Activated T-helper 1 cell treated with anti-CD3 and anti-CD28 coated beads, Interleukin-12 subunit alpha, Interleukin-12 subunit beta, Interleukin-2, Interleukin-4 antibody, amounts not matched to agents 30 ng/mL and 10 ng/mL and 1 ng/mL, durations not matched to agents 14 hours and 24 hours and 36 hours (primary cell): ENCODE measurements at regions of chr11 and their contacts with region 1.

Region 1: GRCh38 chr11:61254403-61255025 is 13.5 kb downstream of the PGA5 start:
- DNase-seq: peak; percentile 58
- H3K4me3 Mint-ChIP-seq: no peak overlapping the region
- H3K27ac Mint-ChIP-seq: no peak overlapping the region
- H3K4me1 Mint-ChIP-seq: no peaks in the 10 kb centered on the region
- H3K27me3 Mint-ChIP-seq: peaks cover 3% of the 10 kb centered on the region

Region 2: DNA sequence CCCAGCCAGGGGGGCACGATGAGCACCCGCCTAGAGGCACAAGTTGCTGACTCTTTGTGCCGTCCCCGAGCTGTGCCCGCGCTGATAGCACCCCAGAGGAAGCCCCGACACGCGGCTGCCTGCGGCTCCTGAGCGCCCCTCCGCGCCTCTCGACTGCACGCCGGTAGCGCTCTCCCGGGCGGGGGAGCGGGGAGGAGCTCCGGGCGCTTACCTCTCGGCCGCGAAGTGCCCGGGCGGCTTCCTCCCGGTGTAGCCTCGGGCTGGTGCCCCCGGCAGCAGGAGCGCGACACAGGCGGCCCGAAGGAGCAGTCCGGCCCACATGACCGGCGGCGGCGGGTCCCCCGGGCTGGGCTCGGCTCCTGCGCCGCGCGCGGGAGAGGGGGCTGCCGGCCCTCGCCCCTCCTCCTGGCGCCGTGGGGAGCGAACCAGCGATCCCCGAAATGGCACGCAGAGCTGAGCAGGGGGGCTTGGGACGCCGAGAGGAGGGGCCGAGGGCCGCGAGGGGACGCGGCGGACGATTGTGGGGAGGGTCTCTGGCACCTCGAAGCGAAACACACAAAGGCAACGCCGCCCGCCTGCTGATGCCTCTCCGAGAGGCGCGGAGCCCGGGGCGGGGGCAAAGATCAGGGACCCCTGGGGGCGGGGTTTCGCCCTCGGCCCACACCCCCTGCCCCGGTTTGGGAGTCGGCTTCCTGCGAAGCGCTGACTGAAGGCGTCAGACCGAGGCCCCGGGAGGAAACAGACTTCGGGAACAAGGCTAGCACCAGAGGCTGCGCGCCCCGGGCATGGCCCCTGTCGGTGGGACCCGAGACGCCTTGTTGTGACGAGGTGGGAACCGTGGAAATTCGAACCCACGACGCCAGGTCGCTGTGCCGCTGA is 40.4 kb after region 1 on chr11 and contains the start of gene VWCE:
- intact Hi-C with region 1: loop called (anchors 1 kb)
- DNase-seq: peak; percentile 64
- H3K4me3 Mint-ChIP-seq: peak within 1 kb of the TSS; percentile 83
- H3K27ac Mint-ChIP-seq: peak within 1 kb of the TSS; percentile 79
- H3K4me1 Mint-ChIP-seq: peaks cover 28% of the 10 kb centered on the region
- H3K27me3 Mint-ChIP-seq: peaks cover 16% of the 10 kb centered on the region
- total RNA-seq, gene VWCE: 9.4 and 10.9 TPM in 2 replicates

Region 3: DNA sequence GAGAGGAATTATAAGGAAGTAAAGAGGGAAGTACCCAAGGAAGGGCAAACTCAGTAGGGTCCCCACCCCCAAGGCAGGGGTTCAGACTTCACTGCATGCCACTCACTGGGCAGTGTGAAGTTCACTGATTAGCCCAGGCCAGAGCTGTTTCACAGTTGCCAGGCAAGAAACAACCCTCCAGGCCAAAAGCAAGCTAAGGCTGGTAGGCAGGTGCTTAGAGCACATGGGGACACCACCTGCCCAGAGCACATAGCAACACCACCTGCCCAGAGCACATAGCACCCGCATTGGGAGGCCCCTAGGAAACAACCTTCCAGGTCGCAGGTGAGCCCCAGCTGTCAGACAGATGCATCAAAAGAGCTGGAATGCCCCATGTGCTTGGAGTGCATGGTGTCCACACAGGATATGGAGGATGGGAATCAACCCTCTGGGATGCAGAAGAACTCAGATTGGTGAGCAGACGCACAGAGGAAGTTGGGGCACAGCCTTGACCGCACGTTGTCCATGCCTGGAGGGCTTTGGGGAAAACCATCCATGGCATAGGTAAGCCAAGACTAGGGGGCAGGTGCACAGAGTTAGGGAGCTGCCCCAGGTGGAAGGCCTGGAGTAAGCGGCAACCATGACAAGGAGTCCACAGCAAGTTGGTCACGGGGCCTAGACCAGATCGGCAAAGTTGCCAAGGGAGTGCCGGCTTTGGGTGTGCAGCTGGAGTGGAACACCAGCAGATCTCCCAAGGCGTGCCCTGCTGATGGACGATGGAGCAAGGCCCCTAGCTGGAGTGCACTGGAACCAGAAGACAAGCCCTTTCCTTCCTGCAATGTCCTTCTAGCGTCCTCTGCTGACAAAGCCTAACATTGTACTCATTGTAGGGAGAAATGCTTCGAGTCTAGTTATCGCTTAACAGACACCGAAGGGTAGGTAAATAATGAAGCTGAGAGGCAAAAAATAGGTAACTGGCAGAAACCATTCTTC is 130.0 kb after region 1 on chr11:
- intact Hi-C with region 1: loop called (anchors 1 kb)
- DNase-seq: no peak
- H3K4me3 Mint-ChIP-seq: no peak overlapping the region
- H3K27ac Mint-ChIP-seq: no peak overlapping the region
- H3K4me1 Mint-ChIP-seq: peaks cover 7% of the 10 kb centered on the region
- H3K27me3 Mint-ChIP-seq: no peaks in the 10 kb centered on the region